Right ventricle myocardium inferior (tissue), 1 donor: ENCODE measurements at regions of chr3 and their contacts with region 1.

Region 1: GRCh38 chr3:177294221-177294620 is 96.9 kb upstream of the TBL1XR1 start:
- DNase-seq: no peak
- ATAC-seq: peak; percentile 92

Region 2: DNA sequence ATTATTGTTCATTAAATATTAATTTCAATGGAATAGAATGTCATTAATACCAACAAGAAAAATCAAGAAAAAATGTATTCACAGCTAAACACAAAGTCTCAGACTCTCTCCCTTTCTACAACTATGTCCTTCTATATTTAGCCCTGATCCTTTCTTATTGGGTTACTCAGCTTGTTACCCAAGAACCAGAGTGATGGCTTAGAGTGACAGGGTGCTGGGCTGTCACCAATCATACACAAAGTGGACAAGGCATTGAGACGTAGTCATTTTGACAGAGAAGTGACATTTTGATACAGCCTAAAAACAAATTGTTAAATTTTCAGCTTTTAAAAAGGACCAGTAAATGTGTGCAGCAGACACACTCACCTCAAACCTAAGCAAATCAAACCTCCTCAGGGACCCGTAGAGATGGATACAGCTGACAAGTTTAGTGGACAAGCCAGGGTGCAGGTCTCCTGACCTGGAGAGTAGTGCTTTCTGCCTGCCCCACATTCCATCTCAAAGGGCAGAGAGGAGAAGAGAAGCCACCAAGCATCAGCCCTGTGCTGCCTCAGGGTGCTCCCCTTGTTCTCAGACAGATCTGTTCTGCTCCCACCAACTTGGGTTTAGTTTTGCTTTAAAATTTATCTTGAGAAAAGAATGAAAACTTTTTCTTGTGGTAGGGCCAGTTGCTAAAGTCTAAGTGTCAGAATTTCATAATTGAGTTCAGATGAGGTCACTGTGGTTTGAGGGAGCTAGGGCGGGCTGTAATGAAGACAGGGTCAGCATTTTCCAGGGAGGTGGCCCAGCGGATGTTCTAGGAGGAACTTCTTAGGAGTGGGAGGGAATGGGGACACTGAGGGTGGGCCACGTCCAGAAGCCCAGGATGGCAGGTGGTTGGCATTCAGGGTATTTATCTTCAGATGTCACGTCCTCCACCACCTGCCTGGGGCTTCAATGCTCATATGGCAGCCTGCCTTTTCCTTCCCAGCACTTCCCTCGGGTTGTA is 39.6 kb after region 1 on chr3:
- intact Hi-C with region 1: loop called (anchors 5 kb)
- DNase-seq: no peak
- ATAC-seq: peak; percentile 63

Region 3: GRCh38 chr3:177345049-177345972 is 51.1 kb after region 1 on chr3:
- intact Hi-C with region 1: loop called (anchors 5 kb)
- DNase-seq: peak; percentile 89
- ATAC-seq: peak; percentile 97

Region 4: GRCh38 chr3:177764377-177764912 is 470.2 kb after region 1 on chr3:
- intact Hi-C with region 1: no loop called
- DNase-seq: no peak
- ATAC-seq: peak; percentile 89